Dendritic cell treated with granulocyte-macrophage colony-stimulating factor and Interleukin-4, amounts not matched to agents 40 ng/mL and 50 ng/mL, for 4 days (primary cell): ENCODE measurements at regions of chr5 and their contacts with region 1.

Region 1: DNA sequence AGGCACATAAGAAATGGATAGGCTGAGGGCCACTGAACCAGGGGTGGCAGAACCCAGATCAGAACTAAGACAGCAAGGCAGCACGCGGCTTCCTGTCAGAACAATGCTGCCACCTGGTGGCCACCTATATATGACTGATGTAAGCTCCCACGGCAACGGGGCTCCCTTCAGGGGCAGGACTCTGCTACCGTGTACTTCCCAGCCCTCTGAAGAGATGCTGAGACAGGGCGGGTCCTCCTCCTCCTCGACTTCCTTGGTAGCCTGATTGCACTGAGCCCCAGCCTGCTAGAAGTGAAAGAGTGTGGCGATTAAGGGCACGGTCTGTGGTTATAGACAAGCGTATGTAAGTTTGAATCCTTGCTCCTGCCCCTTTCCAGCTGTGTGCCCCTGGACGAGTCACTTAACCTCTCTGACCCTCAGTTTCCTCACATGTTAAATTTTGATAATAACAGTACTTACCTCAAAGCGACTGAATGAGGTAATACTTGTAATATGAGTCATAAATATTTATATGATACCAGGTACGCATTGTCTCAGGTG is 13.3 kb downstream of the RPS14 start:
- H3K4me3 Mint-ChIP-seq: no peak overlapping the region
- H3K27ac Mint-ChIP-seq: peak overlapping the region; percentile 64
- H3K4me1 Mint-ChIP-seq: peaks cover 34% of the 10 kb centered on the region
- H3K27me3 Mint-ChIP-seq: peaks cover 4% of the 10 kb centered on the region

Region 2: GRCh38 chr5:150398722-150399523 is 37.3 kb before region 1 on chr5:
- intact Hi-C with region 1: loop called (anchors 5 kb)
- H3K4me3 Mint-ChIP-seq: no peak overlapping the region
- H3K27ac Mint-ChIP-seq: peak overlapping the region; percentile 99
- H3K4me1 Mint-ChIP-seq: peaks cover 49% of the 10 kb centered on the region
- H3K27me3 Mint-ChIP-seq: no peaks in the 10 kb centered on the region